CD14-positive monocyte (primary cell): ENCODE measurements at regions of chr14 and their contacts with region 1.

Region 1: GRCh38 chr14:93959239-93960107 is 16.9 kb downstream of the ASB2 start:
- DNase-seq: peak; percentile 98 to 100 (median 99)
- H3K4me3 ChIP-seq: no peak overlapping the region
- H3K4me3 Mint-ChIP-seq: peak overlapping the region; percentile 52 to 80
- H3K27ac ChIP-seq: peak overlapping the region; percentile 71 to 91
- H3K27ac Mint-ChIP-seq: peak overlapping the region; percentile 93 to 99 (median 97)
- H3K4me1 ChIP-seq: peaks cover 77 to 85% of the 10 kb centered on the region in 2 donors
- H3K4me1 Mint-ChIP-seq: peaks cover 90% of the 10 kb centered on the region
- H3K27me3 ChIP-seq: no peaks in the 10 kb centered on the region
- H3K27me3 Mint-ChIP-seq: peaks cover 1 to 8% (median 5%) of the 10 kb centered on the region in 3 donors
- CTCF ChIP-seq: no peak

Region 2: GRCh38 chr14:93880021-93880820 is 79.3 kb before region 1 on chr14:
- intact Hi-C with region 1: no loop called
- DNase-seq: no peak
- H3K4me3 ChIP-seq: no peak overlapping the region
- H3K4me3 Mint-ChIP-seq: no peak overlapping the region
- H3K27ac ChIP-seq: no peak overlapping the region
- H3K27ac Mint-ChIP-seq: no peak overlapping the region
- H3K4me1 ChIP-seq: no peaks in the 10 kb centered on the region
- H3K4me1 Mint-ChIP-seq: peaks cover 3% of the 10 kb centered on the region
- H3K27me3 ChIP-seq: no peaks in the 10 kb centered on the region
- H3K27me3 Mint-ChIP-seq: peaks cover 6 to 17% (median 12%) of the 10 kb centered on the region in 3 donors
- CTCF ChIP-seq: no peak

Region 3: DNA sequence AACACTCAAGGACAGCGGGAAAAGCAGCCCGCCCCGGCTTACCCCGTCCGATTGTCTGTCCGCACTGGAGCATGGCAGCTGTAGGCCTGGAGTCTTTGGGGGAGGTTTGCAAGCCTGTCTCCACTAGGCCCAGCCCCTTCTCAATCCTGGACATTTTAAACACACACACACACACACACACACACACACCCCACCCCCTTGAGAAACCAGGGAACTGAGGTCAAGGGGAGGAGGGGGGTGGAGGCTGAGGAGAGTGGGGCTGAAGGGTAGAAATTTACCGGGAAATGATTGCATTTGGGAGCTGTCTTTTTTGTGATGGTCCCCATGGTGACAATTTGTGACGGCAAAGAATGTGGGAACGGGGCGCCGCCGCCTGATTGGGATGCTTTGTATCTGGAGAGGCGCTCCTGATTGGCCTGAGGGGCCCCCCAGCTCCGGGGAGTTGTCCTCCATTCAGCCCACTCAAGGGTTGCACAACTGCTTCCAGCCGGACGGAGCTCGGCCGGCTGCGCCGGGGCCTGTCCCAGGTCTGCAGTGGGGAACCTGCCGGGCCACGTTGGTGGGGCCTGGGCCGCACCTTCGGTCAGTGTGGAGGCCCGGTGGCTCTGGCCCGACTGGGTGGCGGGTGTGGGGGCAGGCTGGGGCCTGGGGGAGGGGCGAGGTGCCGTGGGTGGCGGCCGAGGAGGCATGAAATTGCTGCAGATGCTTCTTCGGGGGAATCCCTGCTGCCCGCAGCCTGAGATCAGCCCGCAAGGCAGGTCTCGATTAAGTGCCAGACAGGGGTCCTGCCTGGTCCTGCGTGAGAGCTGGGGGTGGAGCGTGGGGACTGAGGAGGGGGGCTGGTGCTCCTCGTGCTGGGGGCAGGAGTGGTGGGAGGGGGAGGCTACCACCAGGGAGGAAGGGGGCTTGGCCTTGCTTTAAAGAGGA is 32.3 kb before region 1 on chr14 and contains the start of gene FAM181A:
- intact Hi-C with region 1: no loop called
- DNase-seq: no peak
- H3K4me3 ChIP-seq: no peak within 1 kb of the TSS
- H3K4me3 Mint-ChIP-seq: no peak within 1 kb of the TSS
- H3K27ac ChIP-seq: no peak within 1 kb of the TSS
- H3K27ac Mint-ChIP-seq: peak within 1 kb of the TSS in 2 of 7 donors; percentile 64 to 72
- H3K4me1 ChIP-seq: no peaks in the 10 kb centered on the region
- H3K4me1 Mint-ChIP-seq: no peaks in the 10 kb centered on the region
- H3K27me3 ChIP-seq: no peaks in the 10 kb centered on the region
- H3K27me3 Mint-ChIP-seq: peaks cover 2 to 13% (median 5%) of the 10 kb centered on the region in 3 donors
- CTCF ChIP-seq: no peak
- polyA plus RNA-seq, gene FAM181A: not detected

Region 4: GRCh38 chr14:93970549-93970946 is 11.1 kb after region 1 on chr14:
- intact Hi-C with region 1: loop called in 1 of 2 experiments (anchors 1 kb)
- DNase-seq: peak; percentile 79 to 83 (median 80)
- H3K4me3 ChIP-seq: peak overlapping the region; percentile 55 to 77 (median 69)
- H3K4me3 Mint-ChIP-seq: peak overlapping the region; percentile 90 to 98
- H3K27ac ChIP-seq: peak overlapping the region in 1 of 2 donors; percentile 83
- H3K27ac Mint-ChIP-seq: peak overlapping the region; percentile 23 to 91 (median 88)
- H3K4me1 ChIP-seq: peaks cover 54 to 62% of the 10 kb centered on the region in 2 donors
- H3K4me1 Mint-ChIP-seq: peaks cover 68% of the 10 kb centered on the region
- H3K27me3 ChIP-seq: no peaks in the 10 kb centered on the region
- H3K27me3 Mint-ChIP-seq: peaks cover 3 to 14% (median 6%) of the 10 kb centered on the region in 3 donors
- CTCF ChIP-seq: peak; percentile 82

Region 5: GRCh38 chr14:94051115-94051514 is 91.6 kb after region 1 on chr14:
- intact Hi-C with region 1: no loop called
- DNase-seq: no peak
- H3K4me3 ChIP-seq: no peak overlapping the region
- H3K4me3 Mint-ChIP-seq: no peak overlapping the region
- H3K27ac ChIP-seq: no peak overlapping the region
- H3K27ac Mint-ChIP-seq: peak overlapping the region in 1 of 7 donors; percentile 68
- H3K4me1 ChIP-seq: no peaks in the 10 kb centered on the region
- H3K4me1 Mint-ChIP-seq: no peaks in the 10 kb centered on the region
- H3K27me3 ChIP-seq: no peaks in the 10 kb centered on the region
- H3K27me3 Mint-ChIP-seq: no peaks in the 10 kb centered on the region
- CTCF ChIP-seq: no peak

Region 6: DNA sequence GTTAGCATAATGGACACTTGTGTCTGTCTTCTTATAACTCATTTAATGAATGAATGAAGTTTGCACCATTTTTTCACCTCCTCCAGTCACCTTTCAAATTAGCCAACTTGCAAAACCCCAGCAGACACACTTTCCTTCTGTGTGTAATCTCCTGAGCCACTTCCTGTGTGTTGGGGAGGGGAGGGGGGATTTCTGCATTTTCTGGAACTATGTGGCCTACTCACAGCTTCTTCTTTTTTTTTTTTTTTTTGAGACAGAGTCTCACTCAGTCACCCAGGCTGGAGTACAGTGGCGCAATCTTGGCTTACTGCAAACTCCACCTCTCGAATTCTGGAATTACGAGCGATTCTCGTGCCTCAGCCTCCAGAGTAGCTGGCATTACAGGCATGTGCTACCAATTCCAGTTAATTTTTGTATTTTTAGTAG is 433.1 kb after region 1 on chr14:
- intact Hi-C with region 1: loop called in 1 of 2 experiments (anchors 5 kb)
- DNase-seq: peak; percentile 91 to 99 (median 94)
- H3K4me3 ChIP-seq: peak overlapping the region in 1 of 3 experiments; percentile 88
- H3K4me3 Mint-ChIP-seq: peak overlapping the region in 1 of 2 donors; percentile 99
- H3K27ac ChIP-seq: peak overlapping the region; percentile 95 to 96
- H3K27ac Mint-ChIP-seq: peak overlapping the region; percentile 98 to 99 (median 99)
- H3K4me1 ChIP-seq: peaks cover 86 to 97% of the 10 kb centered on the region in 2 donors
- H3K4me1 Mint-ChIP-seq: peaks cover 93% of the 10 kb centered on the region
- H3K27me3 ChIP-seq: no peaks in the 10 kb centered on the region
- H3K27me3 Mint-ChIP-seq: peaks cover 0 to 4% (median 0%) of the 10 kb centered on the region in 3 donors
- CTCF ChIP-seq: no peak